Naive thymus-derived CD4-positive, alpha-beta T cell (primary cell): ENCODE measurements at regions of chr6 and their contacts with region 1.

Region 1: GRCh38 chr6:4135665-4136353 is 434 bp upstream of the ECI2 start:
- DNase-seq: peak; percentile 74 to 93 (median 86)
- ATAC-seq: peak; percentile 97
- H3K4me3 ChIP-seq: peak overlapping the region; percentile 67
- H3K4me3 Mint-ChIP-seq: peak overlapping the region; percentile 83 to 94 (median 87)
- H3K27ac ChIP-seq: peak overlapping the region; percentile 76
- H3K27ac Mint-ChIP-seq: peak overlapping the region; percentile 55 to 88 (median 84)
- H3K4me1 ChIP-seq: peaks cover 10 to 14% of the 10 kb centered on the region in 2 donors
- H3K4me1 Mint-ChIP-seq: peaks cover 20 to 52% (median 37%) of the 10 kb centered on the region in 7 donors
- H3K27me3 ChIP-seq: no peaks in the 10 kb centered on the region
- H3K27me3 Mint-ChIP-seq: no peaks in the 10 kb centered on the region

Region 2: GRCh38 chr6:2841264-2842138 is 1294.3 kb before region 1 on chr6 and contains the start of gene SERPINB1:
- CTCF ChIA-PET with region 1: no interaction called
- POLR2A ChIA-PET with region 1: no interaction called
- intact Hi-C with region 1: loop called in 1 of 2 experiments (anchors 5 kb)
- DNase-seq: peak; percentile 52 to 88 (median 67)
- ATAC-seq: peak; percentile 89
- H3K4me3 ChIP-seq: peak within 1 kb of the TSS; percentile 69
- H3K4me3 Mint-ChIP-seq: peak within 1 kb of the TSS; percentile 86 to 100 (median 92)
- H3K27ac ChIP-seq: peak within 1 kb of the TSS; percentile 85
- H3K27ac Mint-ChIP-seq: peak within 1 kb of the TSS; percentile 86 to 96 (median 95)
- H3K4me1 ChIP-seq: peaks cover 16 to 29% of the 10 kb centered on the region in 2 donors
- H3K4me1 Mint-ChIP-seq: peaks cover 33 to 68% (median 60%) of the 10 kb centered on the region in 7 donors
- H3K27me3 ChIP-seq: no peaks in the 10 kb centered on the region
- H3K27me3 Mint-ChIP-seq: no peaks in the 10 kb centered on the region
- total RNA-seq, gene SERPINB1: 43.8 to 108 (median 62.5) TPM

Region 3: DNA sequence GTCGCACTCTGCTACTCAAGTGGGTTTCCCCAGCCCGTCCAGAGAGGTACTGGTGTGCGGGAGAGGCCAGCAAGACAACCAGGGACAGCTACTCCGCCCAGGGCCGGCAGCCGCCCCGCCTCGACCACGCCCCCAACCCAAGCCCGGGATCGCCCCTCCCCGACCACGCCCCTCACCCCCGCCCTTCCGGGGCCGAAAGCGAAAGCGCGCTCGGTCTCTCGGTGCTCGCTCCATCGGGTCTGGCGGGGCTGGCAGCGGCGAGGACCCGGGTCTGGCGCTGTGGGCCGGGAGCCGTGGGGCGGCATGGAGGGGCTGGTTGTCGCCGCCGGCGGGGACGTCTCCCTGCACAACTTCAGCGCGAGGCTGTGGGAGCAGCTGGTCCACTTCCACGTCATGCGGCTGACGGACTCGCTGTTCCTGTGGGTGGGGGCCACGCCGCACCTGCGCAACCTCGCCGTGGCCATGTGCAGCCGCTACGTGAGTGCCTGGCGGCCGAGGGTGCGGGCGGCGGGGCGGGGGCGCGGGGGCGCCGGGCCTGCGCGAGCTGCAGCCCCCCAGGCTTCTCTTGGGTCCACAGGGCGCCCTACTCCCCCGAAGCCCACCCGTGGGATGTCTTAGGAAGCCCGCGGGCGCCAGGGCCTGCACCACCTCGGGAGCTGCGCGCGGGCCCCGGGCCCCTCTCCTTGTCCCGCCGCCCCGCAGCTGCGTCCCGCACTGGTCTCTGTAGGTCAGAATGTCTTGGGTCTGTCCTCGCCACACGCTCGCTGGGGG is 876.9 kb before region 1 on chr6 and contains the start of gene PSMG4:
- CTCF ChIA-PET with region 1: no interaction called
- POLR2A ChIA-PET with region 1: no interaction called
- intact Hi-C with region 1: loop called in 1 of 2 experiments (anchors 1 kb)
- DNase-seq: peak; percentile 81 to 98 (median 89)
- ATAC-seq: peak; percentile 97
- H3K4me3 ChIP-seq: peak within 1 kb of the TSS; percentile 85
- H3K4me3 Mint-ChIP-seq: peak within 1 kb of the TSS; percentile 85 to 99 (median 97)
- H3K27ac ChIP-seq: peak within 1 kb of the TSS; percentile 80
- H3K27ac Mint-ChIP-seq: peak within 1 kb of the TSS; percentile 84 to 98 (median 92)
- H3K4me1 ChIP-seq: peaks cover 19 to 26% of the 10 kb centered on the region in 2 donors
- H3K4me1 Mint-ChIP-seq: peaks cover 28 to 45% (median 42%) of the 10 kb centered on the region in 7 donors
- H3K27me3 ChIP-seq: no peaks in the 10 kb centered on the region
- H3K27me3 Mint-ChIP-seq: peaks cover 0 to 25% (median 0%) of the 10 kb centered on the region in 5 donors
- total RNA-seq, gene PSMG4: 15.6 to 45.0 (median 27.7) TPM

Region 4: DNA sequence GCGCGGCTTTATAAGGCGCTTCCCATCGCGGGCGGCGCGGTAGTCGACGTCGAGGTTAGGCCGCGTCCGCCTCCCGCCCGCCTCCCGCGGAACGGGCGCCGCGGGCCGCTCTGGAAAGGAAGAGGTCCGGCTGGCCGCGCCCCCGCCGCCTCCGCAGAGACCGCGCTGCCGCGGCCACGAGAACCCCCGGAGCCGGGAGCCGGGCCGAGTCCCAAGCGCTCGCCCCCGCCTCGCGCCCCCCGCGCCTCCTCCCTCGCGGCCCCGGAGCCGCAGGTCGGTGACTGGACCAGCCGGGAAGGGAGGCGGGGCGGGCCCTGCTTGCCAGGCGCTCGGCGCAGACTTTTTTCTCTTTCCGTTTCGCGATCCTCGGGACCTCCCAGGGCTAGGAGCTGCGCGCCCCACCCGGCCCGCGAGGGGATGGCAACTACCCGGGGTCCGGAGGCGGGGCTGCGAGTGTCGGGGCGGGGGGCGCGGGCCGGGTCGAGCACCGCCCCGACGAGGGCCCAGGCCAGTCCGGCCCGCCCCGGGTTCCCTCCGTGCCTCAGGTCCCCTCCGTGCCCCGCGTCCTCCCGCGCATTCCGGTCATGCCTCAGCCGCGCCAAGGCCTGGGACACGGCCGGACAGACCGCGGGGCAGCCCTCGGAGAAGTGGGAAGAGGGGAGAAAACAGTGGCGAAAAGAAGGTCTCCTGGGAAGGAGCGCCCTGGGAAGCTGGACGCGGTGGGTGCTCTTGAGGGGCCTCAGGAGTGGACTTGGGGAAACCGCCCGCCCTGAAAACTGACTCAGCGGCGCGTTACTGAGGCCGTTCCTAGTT is 383.9 kb before region 1 on chr6:
- CTCF ChIA-PET with region 1: no interaction called
- POLR2A ChIA-PET with region 1: no interaction called
- intact Hi-C with region 1: loop called in 1 of 2 experiments (anchors 5 kb)
- DNase-seq: peak; percentile 11 to 72 (median 38)
- ATAC-seq: peak; percentile 77
- H3K4me3 ChIP-seq: peak overlapping the region; percentile 46
- H3K4me3 Mint-ChIP-seq: peak overlapping the region in 9 of 10 donors; percentile 35 to 82 (median 53)
- H3K27ac ChIP-seq: no peak overlapping the region
- H3K27ac Mint-ChIP-seq: no peak overlapping the region
- H3K4me1 ChIP-seq: no peaks in the 10 kb centered on the region
- H3K4me1 Mint-ChIP-seq: peaks cover 0 to 6% (median 4%) of the 10 kb centered on the region in 7 donors
- H3K27me3 ChIP-seq: peaks cover 7 to 9% of the 10 kb centered on the region in 2 donors
- H3K27me3 Mint-ChIP-seq: peaks cover 36 to 72% (median 40%) of the 10 kb centered on the region in 5 donors

Region 5: DNA sequence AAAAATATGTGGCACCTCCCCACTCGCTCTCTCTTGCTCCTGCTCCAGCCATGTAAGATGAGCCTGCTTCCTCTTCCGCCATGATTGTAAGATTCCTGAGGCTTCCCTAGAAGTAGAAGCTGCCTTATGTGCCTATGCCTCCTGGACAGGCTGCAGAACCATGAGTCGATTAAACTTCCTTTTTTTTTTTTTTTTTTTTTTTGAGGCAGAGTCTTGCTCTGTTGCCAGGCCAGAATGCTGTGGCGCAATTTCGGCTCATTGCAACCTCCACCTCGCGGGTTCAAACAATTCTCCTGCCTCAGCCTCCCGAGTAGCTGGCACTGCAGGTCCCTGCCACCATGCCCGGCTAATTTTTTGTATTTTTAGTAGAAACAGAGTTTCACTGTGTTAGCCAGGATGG is 169.4 kb before region 1 on chr6:
- CTCF ChIA-PET with region 1: no interaction called
- POLR2A ChIA-PET with region 1: no interaction called
- intact Hi-C with region 1: no loop called
- DNase-seq: no peak
- ATAC-seq: no peak
- H3K4me3 ChIP-seq: no peak overlapping the region
- H3K4me3 Mint-ChIP-seq: no peak overlapping the region
- H3K27ac ChIP-seq: no peak overlapping the region
- H3K27ac Mint-ChIP-seq: no peak overlapping the region
- H3K4me1 ChIP-seq: no peaks in the 10 kb centered on the region
- H3K4me1 Mint-ChIP-seq: peaks cover 0 to 7% (median 0%) of the 10 kb centered on the region in 7 donors
- H3K27me3 ChIP-seq: no peaks in the 10 kb centered on the region
- H3K27me3 Mint-ChIP-seq: peaks cover 0 to 6% (median 0%) of the 10 kb centered on the region in 5 donors

Region 6: GRCh38 chr6:4155848-4156466 is 20.1 kb after region 1 on chr6:
- CTCF ChIA-PET with region 1: interaction called, 4 read pairs
- POLR2A ChIA-PET with region 1: interaction called, 6 read pairs
- intact Hi-C with region 1: loop called (anchors 1 kb)
- DNase-seq: peak; percentile 33 to 81 (median 71)
- ATAC-seq: peak; percentile 95
- H3K4me3 ChIP-seq: no peak overlapping the region
- H3K4me3 Mint-ChIP-seq: peak overlapping the region in 2 of 10 donors; percentile 20 to 29
- H3K27ac ChIP-seq: no peak overlapping the region
- H3K27ac Mint-ChIP-seq: no peak overlapping the region
- H3K4me1 ChIP-seq: no peaks in the 10 kb centered on the region
- H3K4me1 Mint-ChIP-seq: peaks cover 0 to 24% (median 5%) of the 10 kb centered on the region in 7 donors
- H3K27me3 ChIP-seq: no peaks in the 10 kb centered on the region
- H3K27me3 Mint-ChIP-seq: peaks cover 0 to 12% (median 6%) of the 10 kb centered on the region in 5 donors

Region 7: DNA sequence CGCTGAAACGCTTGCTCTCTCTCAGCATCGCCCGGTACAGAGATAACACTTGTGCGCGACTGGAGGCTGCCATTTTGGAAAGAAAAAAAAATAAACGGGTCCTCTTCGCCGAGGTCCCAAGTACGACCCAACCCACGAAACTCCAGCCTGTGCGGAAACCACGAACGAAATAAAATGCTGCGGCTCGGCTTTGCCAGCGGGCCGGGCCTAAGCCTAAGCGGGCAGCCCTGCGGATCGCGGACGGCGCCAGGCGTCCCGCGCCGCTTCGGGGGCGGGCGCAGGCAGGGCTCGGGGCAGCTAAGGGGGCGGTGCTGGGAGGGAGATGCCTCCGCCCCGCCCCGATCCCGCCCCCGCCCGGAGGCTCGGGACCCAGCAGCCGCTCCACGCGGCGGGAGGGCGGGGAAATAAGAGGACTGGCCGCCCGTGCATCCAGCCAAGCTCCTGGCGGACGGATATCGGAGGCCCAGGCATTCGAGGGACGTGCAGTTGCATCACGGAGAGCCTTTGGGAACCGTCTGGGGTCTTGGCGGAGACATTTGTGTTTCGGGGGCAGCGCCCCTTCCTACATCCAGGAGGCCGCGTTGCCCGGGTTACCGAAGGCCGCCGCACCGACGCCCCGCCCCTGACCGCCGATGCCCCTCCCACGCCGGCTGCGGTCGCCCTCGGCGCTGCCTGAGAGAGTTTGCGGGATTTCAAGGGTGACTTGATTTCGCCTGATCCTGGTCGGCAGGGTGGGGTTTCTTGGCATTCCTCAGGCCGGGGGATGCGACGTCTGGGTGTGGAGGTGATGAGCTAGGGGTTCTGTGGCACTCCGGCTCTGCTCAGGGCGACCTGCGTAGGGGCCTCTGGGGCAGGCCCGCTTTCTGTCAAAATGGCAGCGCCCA is 1125.1 kb after region 1 on chr6 and contains the starts of genes FARS2 and LYRM4:
- CTCF ChIA-PET with region 1: no interaction called
- POLR2A ChIA-PET with region 1: no interaction called
- intact Hi-C with region 1: loop called in 1 of 2 experiments (anchors 5 kb)
- DNase-seq: peak; percentile 86 to 99 (median 97)
- ATAC-seq: peak; percentile 91
- H3K4me3 ChIP-seq: peak within 1 kb of the TSS; percentile 63
- H3K4me3 Mint-ChIP-seq: peak within 1 kb of the TSS; percentile 94 to 100 (median 98)
- H3K27ac ChIP-seq: peak within 1 kb of the TSS; percentile 93
- H3K27ac Mint-ChIP-seq: peak within 1 kb of the TSS; percentile 99 to 100 (median 100)
- H3K4me1 ChIP-seq: peaks cover 9 to 13% of the 10 kb centered on the region in 2 donors
- H3K4me1 Mint-ChIP-seq: peaks cover 18 to 63% (median 43%) of the 10 kb centered on the region in 7 donors
- H3K27me3 ChIP-seq: no peaks in the 10 kb centered on the region
- H3K27me3 Mint-ChIP-seq: no peaks in the 10 kb centered on the region
- total RNA-seq, gene FARS2: 16.2 to 23.1 (median 20.3) TPM
- total RNA-seq, gene LYRM4: 15.1 to 27.2 (median 22.4) TPM